HEK293T (cell line): ENCODE measurements at regions of chr1 and their contacts with region 1.

Region 1: GRCh38 chr1:20597650-20598049 is 8.8 kb downstream of the CDA start:
- DNase-seq: no peak

Region 2: DNA sequence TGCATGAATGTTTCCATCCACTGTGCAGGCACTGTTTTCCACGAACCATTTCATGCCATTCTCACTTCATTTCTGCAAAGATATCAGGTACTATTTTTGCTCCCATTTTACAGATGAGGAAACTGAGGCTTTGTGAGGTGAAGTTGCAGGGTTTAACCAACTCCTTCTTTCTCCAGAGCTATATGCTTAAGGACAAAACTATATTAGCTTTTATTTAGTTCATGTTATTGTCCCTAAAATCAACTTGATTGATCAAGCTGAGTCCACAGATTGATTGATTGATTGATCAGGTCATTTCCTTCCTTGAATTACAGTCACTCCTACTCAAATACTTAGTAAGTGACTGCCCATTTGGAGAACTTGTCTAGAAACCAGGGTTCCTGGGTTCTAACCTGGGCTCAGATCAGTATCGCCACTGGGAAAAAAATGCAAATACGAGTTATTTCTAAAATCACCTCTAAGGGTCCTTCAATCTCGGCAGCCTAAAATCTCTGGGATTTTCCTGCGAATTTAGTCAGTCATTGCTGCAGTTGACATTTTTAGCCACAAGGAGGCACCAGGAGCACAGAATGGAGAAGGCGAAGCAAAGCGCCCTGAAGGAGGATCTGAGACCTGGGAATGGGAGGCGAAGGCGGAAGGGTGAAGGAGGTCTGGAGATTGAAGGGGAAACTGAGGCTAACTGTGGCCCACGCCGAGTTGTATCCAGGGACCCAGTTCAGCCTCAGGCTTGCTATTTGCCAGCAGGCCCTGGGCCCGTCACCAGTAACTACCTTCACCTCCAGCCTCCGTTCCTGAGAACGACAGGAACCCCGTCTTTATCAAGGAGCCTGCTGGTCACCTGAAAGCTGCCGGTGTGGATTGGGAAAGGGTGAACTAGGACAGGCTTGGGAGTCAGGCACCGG is 75.4 kb before region 1 on chr1:
- CTCF ChIA-PET with region 1: interaction called, 10 read pairs
- POLR2A ChIA-PET with region 1: no interaction called
- DNase-seq: peak; percentile 81

Region 3: GRCh38 chr1:20584890-20585289 is 12.8 kb before region 1 on chr1:
- CTCF ChIA-PET with region 1: no interaction called
- POLR2A ChIA-PET with region 1: no interaction called
- DNase-seq: no peak